ENCODE measurements at regions of chr7 and their contacts with region 1.

Region 1: DNA sequence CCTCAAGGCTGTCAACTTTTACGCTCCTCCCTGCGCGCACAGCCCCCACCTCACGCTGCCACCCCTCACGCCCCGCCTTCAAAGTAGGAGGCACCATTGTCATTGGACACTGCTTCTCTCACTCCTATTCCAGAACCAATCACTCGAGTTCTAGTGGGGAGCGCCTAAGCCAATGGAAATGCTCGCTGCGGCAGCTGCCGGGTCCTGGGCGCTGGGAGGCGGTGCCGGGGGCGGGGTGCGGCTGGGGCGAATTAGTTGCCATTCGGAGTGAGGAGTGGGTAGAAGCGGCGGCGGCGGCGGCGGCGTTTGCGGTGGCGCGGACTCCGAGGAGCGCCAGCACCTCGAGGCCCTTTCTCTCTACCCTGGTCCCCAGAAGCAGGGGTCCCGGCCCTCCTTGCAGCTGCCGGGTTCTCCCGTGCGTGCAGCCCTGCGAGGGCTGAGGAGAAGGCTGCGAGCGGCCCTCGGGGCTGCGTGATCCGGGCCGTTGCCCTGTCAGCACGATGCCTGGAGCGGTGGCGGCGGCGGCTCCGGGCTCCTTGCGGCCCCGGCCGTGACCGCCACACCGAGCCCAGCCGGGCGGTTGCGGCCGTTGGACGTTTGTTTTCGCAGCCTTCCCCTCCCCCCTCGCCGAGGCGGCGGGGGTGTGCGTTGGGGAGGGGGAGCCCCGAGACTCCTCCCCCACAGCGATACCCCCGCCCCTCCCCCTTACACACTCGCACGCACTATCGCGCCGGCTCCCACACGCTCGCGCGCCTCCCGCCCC is at the start of gene GLCCI1:
- DNase-seq: peak; percentile 94 to 98 (median 96)
- ATAC-seq: peak; percentile 97
- H3K4me3 ChIP-seq: peak within 1 kb of the TSS; percentile 84
- H3K27ac ChIP-seq: peak within 1 kb of the TSS; percentile 94
- H3K4me1 ChIP-seq: peaks cover 6 to 11% of the 10 kb centered on the region in 2 experiments; a peak in 4 of 5 replicates
- H3K27me3 ChIP-seq: no peaks in the 10 kb centered on the region
- CTCF ChIP-seq: no peak
- EP300 ChIP-seq: no peak
- POLR2A ChIP-seq: peak; percentile 93
- RAD21 ChIP-seq: no peak
- polyA plus RNA-seq, gene GLCCI1: 2.7 TPM

Region 2: DNA sequence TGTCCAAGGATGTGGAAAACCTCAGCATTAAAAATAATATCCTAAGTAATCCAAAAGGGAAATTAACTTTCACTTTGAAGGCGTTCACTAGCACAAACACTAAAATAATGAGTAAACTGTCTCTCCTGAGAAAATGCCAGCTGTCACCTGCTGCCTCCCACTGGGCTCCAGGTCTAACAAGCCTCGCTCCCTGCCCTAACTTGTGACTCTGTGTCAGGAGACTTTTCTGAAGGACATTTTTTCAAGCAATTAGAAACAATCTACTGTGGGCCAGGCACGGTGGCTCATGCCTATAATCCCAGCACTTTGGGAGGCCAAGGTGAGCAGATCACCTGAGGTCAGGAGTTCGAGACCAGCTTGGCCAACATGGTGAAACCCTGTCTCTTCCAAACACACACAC is 73.0 kb before region 1 on chr7:
- CTCF ChIA-PET with region 1: no interaction called
- POLR2A ChIA-PET with region 1: no interaction called
- in situ Hi-C with region 1: no loop called
- intact Hi-C with region 1: no loop called
- DNase-seq: no peak
- ATAC-seq: no peak
- H3K4me3 ChIP-seq: no peak overlapping the region
- H3K27ac ChIP-seq: no peak overlapping the region
- H3K4me1 ChIP-seq: no peaks in the 10 kb centered on the region
- H3K27me3 ChIP-seq: no peaks in the 10 kb centered on the region
- CTCF ChIP-seq: no peak
- EP300 ChIP-seq: no peak
- POLR2A ChIP-seq: no peak
- RAD21 ChIP-seq: no peak

Region 3: DNA sequence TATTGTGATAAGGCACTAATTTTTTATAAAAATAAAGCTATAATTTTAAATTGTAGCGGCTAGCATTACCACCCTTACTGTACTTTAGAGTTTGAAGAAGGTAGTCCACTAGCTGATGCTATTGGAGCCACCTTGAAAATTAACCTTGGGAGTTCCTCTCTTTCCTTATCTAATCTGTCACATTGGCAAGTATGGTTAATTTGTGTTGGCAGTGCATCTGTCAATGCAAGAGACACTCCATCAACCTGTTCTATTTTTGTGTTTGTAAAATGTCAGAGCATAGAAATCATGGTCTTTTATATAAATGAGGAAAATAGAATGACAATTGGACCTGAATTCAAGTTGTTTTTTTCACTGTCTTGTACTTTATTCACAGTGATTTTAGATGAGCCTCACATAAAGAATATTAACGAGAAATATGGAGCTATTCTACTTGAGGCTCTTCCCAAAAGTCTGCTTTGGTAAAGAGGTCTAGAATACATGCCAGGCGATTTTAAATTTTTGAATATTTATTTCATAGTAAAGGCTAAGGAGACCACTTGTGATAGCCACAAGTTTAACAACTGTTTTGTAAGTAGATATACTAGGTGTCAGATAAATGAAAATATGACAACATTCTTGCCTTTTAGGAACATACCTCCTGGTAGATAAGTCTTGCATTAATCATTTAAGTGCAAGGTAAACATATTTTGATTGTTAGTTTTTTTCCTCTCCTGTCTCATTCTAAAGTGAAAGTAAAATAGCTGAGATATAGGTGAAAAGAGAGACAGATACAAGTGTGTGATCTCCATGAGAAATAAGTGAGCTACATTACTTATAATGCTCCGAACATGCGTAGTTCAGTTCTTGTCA is 20.6 kb after region 1 on chr7:
- CTCF ChIA-PET with region 1: no interaction called
- POLR2A ChIA-PET with region 1: interaction called, 12 read pairs
- in situ Hi-C with region 1: no loop called
- intact Hi-C with region 1: no loop called
- DNase-seq: peak in 1 of 4 experiments; percentile 43
- ATAC-seq: peak; percentile 68
- H3K4me3 ChIP-seq: no peak overlapping the region
- H3K27ac ChIP-seq: peak overlapping the region; percentile 5; the same call in 2 of the 3 replicates
- H3K4me1 ChIP-seq: peaks cover 0 to 12% of the 10 kb centered on the region in 2 experiments; a peak in 2 of 5 replicates
- H3K27me3 ChIP-seq: no peaks in the 10 kb centered on the region
- CTCF ChIP-seq: no peak
- EP300 ChIP-seq: peak; percentile 52; the same call in 1 of the 2 replicates
- POLR2A ChIP-seq: no peak
- RAD21 ChIP-seq: no peak

Region 4: GRCh38 chr7:8172372-8173354 is 203.9 kb after region 1 on chr7:
- CTCF ChIA-PET with region 1: no interaction called
- POLR2A ChIA-PET with region 1: no interaction called
- in situ Hi-C with region 1: no loop called
- intact Hi-C with region 1: no loop called
- DNase-seq: no peak
- ATAC-seq: no peak
- H3K4me3 ChIP-seq: no peak overlapping the region
- H3K27ac ChIP-seq: no peak overlapping the region
- H3K4me1 ChIP-seq: peaks cover 0 to 17% of the 10 kb centered on the region in 2 experiments; a peak in 4 of 5 replicates
- H3K27me3 ChIP-seq: no peaks in the 10 kb centered on the region
- CTCF ChIP-seq: no peak
- EP300 ChIP-seq: no peak
- POLR2A ChIP-seq: no peak
- RAD21 ChIP-seq: no peak

Region 5: DNA sequence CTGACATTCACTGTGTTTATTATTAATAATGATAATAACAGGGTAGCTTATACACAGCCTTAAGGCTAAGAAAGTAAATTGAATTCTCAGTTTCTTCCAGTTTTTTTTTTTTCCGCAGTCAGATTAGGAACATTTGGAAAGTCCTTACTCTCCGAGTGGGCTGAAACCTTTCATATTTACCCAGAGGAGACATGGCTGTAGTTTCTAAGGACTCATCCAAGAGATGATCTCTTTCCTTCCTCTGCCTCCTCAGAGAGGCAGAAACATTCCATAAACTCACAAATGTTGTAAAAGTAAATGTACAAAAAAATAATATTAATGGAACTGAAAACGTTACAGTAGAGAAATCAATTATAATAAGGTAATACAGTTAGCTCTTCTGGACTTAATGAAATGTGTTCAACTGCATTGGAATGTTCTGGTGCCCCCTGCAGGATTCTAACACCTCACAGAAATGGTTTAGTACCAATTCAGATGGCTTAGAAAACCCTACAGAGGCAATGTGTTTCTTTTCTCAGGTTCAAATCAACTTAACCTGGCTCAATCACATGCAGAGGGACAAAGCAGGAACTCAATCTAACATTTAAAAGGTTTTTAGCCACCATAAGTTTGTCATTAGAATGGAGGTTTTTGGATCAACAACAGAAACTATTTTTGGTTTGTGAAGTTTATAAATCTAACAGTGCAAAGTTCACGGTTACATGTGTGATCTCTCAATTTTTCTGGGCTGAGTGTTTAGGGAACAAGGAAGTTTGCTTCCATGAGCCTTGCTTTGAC is 221.6 kb after region 1 on chr7:
- CTCF ChIA-PET with region 1: no interaction called
- POLR2A ChIA-PET with region 1: no interaction called
- in situ Hi-C with region 1: loop called (anchors 10 kb)
- intact Hi-C with region 1: loop called (anchors 2 kb)
- DNase-seq: peak in 1 of 4 experiments; percentile 71
- ATAC-seq: peak; percentile 88
- H3K4me3 ChIP-seq: no peak overlapping the region
- H3K27ac ChIP-seq: no peak overlapping the region
- H3K4me1 ChIP-seq: peaks cover 0 to 3% of the 10 kb centered on the region in 2 experiments; a peak in 1 of 5 replicates
- H3K27me3 ChIP-seq: no peaks in the 10 kb centered on the region
- CTCF ChIP-seq: peak; percentile 39 to 82 (median 59)
- EP300 ChIP-seq: no peak
- POLR2A ChIP-seq: no peak
- RAD21 ChIP-seq: peak; percentile 89 to 92